ENCODE measurements at regions of chr12 and their contacts with region 1.

Region 1: DNA sequence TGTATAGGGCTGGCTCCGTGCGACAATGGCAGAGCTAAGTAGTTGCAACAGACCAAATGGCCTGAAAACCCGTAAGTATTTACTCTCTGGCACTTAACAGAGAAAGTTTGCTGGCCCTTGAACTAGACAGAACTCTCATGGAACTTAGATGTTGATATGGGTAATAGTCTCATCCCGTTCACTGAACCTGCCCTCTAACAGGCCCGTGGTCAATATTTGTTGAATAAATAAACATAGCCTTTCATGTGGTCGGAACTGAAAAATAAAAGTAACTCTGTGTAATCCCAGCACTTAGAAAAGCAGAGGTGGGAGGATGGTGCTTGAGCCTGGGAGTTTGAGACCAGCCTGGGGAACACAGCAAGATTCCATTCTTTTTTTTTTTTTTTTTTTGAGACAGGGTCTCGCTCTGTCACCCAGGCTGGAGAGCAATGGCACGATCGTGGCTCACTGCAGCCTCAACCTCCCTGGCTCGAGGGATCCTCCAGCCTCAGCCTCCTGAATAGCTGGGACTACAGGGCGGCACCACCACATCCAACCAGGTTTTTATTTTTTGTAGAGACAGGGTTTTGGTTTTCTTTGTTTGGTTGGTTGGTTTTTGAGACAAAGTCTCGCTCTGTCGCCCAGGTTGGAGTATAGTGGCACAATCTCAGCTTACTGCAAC is 29.7 kb downstream of the KDM2B start:
- DNase-seq: no peak
- H3K4me3 ChIP-seq: no peak overlapping the region
- H3K27ac ChIP-seq: no peak overlapping the region
- H3K4me1 ChIP-seq: peaks cover 0 to 32% (median 10%) of the 10 kb centered on the region in 6 donors
- H3K27me3 ChIP-seq: no peaks in the 10 kb centered on the region
- CTCF ChIP-seq: no peak
- POLR2A ChIP-seq: no peak

Region 2: DNA sequence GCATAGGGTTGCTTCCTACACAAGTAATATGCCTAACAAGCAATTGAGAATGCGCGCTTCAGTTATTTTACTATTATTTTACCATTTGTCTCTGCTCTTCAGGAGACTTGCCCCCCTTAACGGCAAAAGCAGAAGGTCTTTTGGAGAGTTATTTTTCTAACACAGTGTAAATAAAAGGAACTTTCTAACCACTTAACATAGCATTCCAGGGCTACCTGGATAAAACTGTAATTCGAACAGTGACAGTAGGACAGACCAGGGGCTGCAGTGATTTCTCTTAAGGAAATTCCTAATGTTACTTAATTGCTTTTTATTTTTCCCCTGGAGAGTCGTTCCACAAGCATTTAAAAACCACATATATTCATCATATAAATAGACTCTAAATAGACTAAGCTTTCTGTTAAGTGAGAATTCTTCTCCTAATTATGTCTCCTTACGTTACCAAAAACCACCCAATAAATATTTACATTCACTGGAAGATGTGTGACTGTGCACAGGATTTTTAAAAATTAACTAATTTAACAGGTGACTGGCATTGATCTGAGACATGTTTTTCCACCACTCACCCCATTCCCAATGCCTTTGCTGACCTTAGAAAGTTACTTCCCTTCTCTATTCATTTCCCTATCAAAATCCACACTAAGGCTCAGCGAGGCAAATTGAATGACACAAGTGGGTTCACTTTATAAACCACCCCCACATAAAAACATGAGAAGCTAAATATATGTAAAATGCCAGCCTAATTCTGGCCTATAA is 78.8 kb before region 1 on chr12:
- intact Hi-C with region 1: no loop called
- DNase-seq: no peak
- H3K4me3 ChIP-seq: no peak overlapping the region
- H3K27ac ChIP-seq: no peak overlapping the region
- H3K4me1 ChIP-seq: peaks cover 6 to 43% (median 14%) of the 10 kb centered on the region in 6 donors
- H3K27me3 ChIP-seq: no peaks in the 10 kb centered on the region
- CTCF ChIP-seq: no peak
- POLR2A ChIP-seq: no peak

Region 3: GRCh38 chr12:121626087-121626852 is 75.2 kb after region 1 on chr12 and contains the start of gene ORAI1:
- intact Hi-C with region 1: loop called (anchors 5 kb)
- DNase-seq: peak; percentile 99
- H3K4me3 ChIP-seq: peak within 1 kb of the TSS; percentile 77 to 98 (median 86)
- H3K27ac ChIP-seq: peak within 1 kb of the TSS; percentile 95 to 99 (median 98)
- H3K4me1 ChIP-seq: peaks cover 43 to 63% (median 55%) of the 10 kb centered on the region in 6 donors
- H3K27me3 ChIP-seq: no peaks in the 10 kb centered on the region
- CTCF ChIP-seq: peak in 5 of 11 experiments; percentile 17 to 47 (median 45)
- POLR2A ChIP-seq: peak in 2 of 3 donors; percentile 37 to 71
- total RNA-seq, gene ORAI1: 27.7 to 47.5 (median 36.6) TPM

Region 4: GRCh38 chr12:121678716-121679580 is 127.8 kb after region 1 on chr12:
- intact Hi-C with region 1: loop called (anchors 5 kb)
- DNase-seq: no peak
- H3K4me3 ChIP-seq: no peak overlapping the region
- H3K27ac ChIP-seq: no peak overlapping the region
- H3K4me1 ChIP-seq: peaks cover 0 to 17% (median 4%) of the 10 kb centered on the region in 6 donors
- H3K27me3 ChIP-seq: no peaks in the 10 kb centered on the region
- CTCF ChIP-seq: no peak
- POLR2A ChIP-seq: no peak

Region 5: GRCh38 chr12:121968876-121969275 is 417.8 kb after region 1 on chr12:
- intact Hi-C with region 1: no loop called
- DNase-seq: peak; percentile 82
- H3K4me3 ChIP-seq: no peak overlapping the region
- H3K27ac ChIP-seq: no peak overlapping the region
- H3K4me1 ChIP-seq: peaks cover 0 to 28% (median 9%) of the 10 kb centered on the region in 6 donors
- H3K27me3 ChIP-seq: no peaks in the 10 kb centered on the region
- CTCF ChIP-seq: no peak
- POLR2A ChIP-seq: no peak

Region 6: GRCh38 chr12:122031342-122032216 is 480.5 kb after region 1 on chr12:
- intact Hi-C with region 1: no loop called
- DNase-seq: no peak
- H3K4me3 ChIP-seq: no peak overlapping the region
- H3K27ac ChIP-seq: no peak overlapping the region
- H3K4me1 ChIP-seq: peaks cover 3 to 61% (median 33%) of the 10 kb centered on the region in 6 donors
- H3K27me3 ChIP-seq: no peaks in the 10 kb centered on the region
- CTCF ChIP-seq: peak in 10 of 11 experiments; percentile 37 to 81 (median 70)
- POLR2A ChIP-seq: no peak